Activated CD4-positive, alpha-beta memory T cell treated with anti-CD3 and anti-CD28 coated beads for 36 hours (primary cell): ENCODE measurements at regions of chr7 and their contacts with region 1.

Region 1: GRCh38 chr7:115844857-115845256 is 185.7 kb downstream of the TFEC start:
- DNase-seq: no peak
- H3K4me3 Mint-ChIP-seq: no peak overlapping the region
- H3K27ac Mint-ChIP-seq: no peak overlapping the region
- H3K4me1 Mint-ChIP-seq: no peaks in the 10 kb centered on the region
- H3K27me3 Mint-ChIP-seq: no peaks in the 10 kb centered on the region

Region 2: DNA sequence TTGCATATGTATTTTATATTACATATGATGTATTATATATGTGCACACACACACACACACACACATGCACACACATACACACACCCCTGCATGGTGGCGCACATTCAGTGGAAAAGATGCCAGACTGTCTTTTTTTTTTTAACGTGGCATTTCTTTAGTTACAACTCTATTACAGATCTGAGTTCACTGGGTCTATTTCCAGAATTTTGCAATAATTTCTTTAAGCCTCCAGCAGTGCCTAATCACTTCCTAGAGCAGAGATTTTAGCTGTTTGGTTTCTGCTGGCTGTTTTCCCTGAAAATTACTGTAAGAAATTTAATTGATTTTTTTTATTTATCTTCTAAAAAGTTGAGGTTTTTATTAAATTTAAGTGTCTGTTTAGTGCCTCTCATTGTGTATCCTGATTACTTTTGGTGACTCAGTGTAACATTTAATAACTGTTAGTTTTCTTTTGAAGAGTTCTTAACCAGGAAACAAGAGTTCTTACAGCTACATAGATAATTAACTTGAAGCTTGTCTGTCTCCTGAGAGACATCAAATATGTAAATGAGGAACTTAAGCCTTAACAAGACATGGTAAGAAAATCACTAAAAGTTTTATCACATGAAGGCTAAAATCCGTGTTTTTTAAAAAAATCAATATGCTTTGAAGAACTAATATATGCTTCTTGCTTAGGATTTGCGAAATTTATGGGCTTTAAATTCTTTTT is 690.9 kb before region 1 on chr7:
- CTCF ChIA-PET with region 1: no interaction called
- POLR2A ChIA-PET with region 1: no interaction called
- intact Hi-C with region 1: no loop called
- DNase-seq: no peak
- H3K4me3 Mint-ChIP-seq: no peak overlapping the region
- H3K27ac Mint-ChIP-seq: no peak overlapping the region
- H3K4me1 Mint-ChIP-seq: no peaks in the 10 kb centered on the region
- H3K27me3 Mint-ChIP-seq: no peaks in the 10 kb centered on the region

Region 3: GRCh38 chr7:115429918-115430317 is 414.9 kb before region 1 on chr7:
- CTCF ChIA-PET with region 1: no interaction called
- POLR2A ChIA-PET with region 1: no interaction called
- intact Hi-C with region 1: loop called (anchors 10 kb)
- DNase-seq: no peak
- H3K4me3 Mint-ChIP-seq: no peak overlapping the region
- H3K27ac Mint-ChIP-seq: no peak overlapping the region
- H3K4me1 Mint-ChIP-seq: no peaks in the 10 kb centered on the region
- H3K27me3 Mint-ChIP-seq: peaks cover 1% of the 10 kb centered on the region